WTC11 (cell line): ENCODE measurements at regions of chr12 and their contacts with region 1.

Region 1: GRCh38 chr12:113196996-113197395 is 11.5 kb downstream of the RITA1 start:
- DNase-seq: peak; percentile 57
- ATAC-seq: peak; percentile 97
- H3K4me3 Mint-ChIP-seq: no peak overlapping the region
- H3K27ac Mint-ChIP-seq: no peak overlapping the region
- H3K4me1 Mint-ChIP-seq: peaks cover 4% of the 10 kb centered on the region; the same call in 1 of the 2 replicates
- H3K27me3 Mint-ChIP-seq: no peaks in the 10 kb centered on the region
- CTCF ChIP-seq: no peak

Region 2: GRCh38 chr12:112937741-112938719 is 259.0 kb before region 1 on chr12 and contains the start of gene OAS3:
- CTCF ChIA-PET with region 1: no interaction called
- POLR2A ChIA-PET with region 1: no interaction called
- DNase-seq: peak; percentile 41
- ATAC-seq: peak; percentile 67
- H3K4me3 Mint-ChIP-seq: peak within 1 kb of the TSS; percentile 69
- H3K27ac Mint-ChIP-seq: no peak within 1 kb of the TSS
- H3K4me1 Mint-ChIP-seq: peaks cover 9% of the 10 kb centered on the region
- H3K27me3 Mint-ChIP-seq: peaks cover 24% of the 10 kb centered on the region
- CTCF ChIP-seq: no peak
- total RNA-seq, gene OAS3: 1.2 to 1.6 TPM (median 1.4 TPM) in 3 replicates

Region 3: GRCh38 chr12:113221181-113221997 is 24.4 kb after region 1 on chr12 and contains the start of gene TPCN1:
- CTCF ChIA-PET with region 1: interaction called, 16 read pairs
- POLR2A ChIA-PET with region 1: no interaction called
- DNase-seq: peak; percentile 100
- ATAC-seq: peak; percentile 93
- H3K4me3 Mint-ChIP-seq: peak within 1 kb of the TSS; percentile 85
- H3K27ac Mint-ChIP-seq: peak within 1 kb of the TSS; percentile 93
- H3K4me1 Mint-ChIP-seq: peaks cover 20% of the 10 kb centered on the region
- H3K27me3 Mint-ChIP-seq: no peaks in the 10 kb centered on the region
- CTCF ChIP-seq: no peak
- total RNA-seq, gene TPCN1: 29.0 to 32.7 TPM (median 30.7 TPM) in 3 replicates